Mammary epithelial cell (primary cell): ENCODE measurements at regions of chrX and their contacts with region 1.

Region 1: GRCh38 chrX:113512700-113513395 is 672.2 kb upstream of the AMOT start:
- DNase-seq: peak; percentile 62
- H3K4me3 ChIP-seq: no peak overlapping the region
- H3K27ac ChIP-seq: peak overlapping the region; percentile 4
- H3K4me1 ChIP-seq: no peaks in the 10 kb centered on the region
- H3K27me3 ChIP-seq: peaks cover 3% of the 10 kb centered on the region
- CTCF ChIP-seq: no peak

Region 2: GRCh38 chrX:113580486-113580885 is 67.6 kb after region 1 on chrX:
- CTCF ChIA-PET with region 1: no interaction called
- dilution Hi-C with region 1: no loop called
- in situ Hi-C with region 1: no loop called
- intact Hi-C with region 1: no loop called
- DNase-seq: no peak
- H3K4me3 ChIP-seq: no peak overlapping the region
- H3K27ac ChIP-seq: no peak overlapping the region
- H3K4me1 ChIP-seq: no peaks in the 10 kb centered on the region
- H3K27me3 ChIP-seq: no peaks in the 10 kb centered on the region
- CTCF ChIP-seq: no peak

Region 3: GRCh38 chrX:113644426-113644825 is 131.6 kb after region 1 on chrX:
- CTCF ChIA-PET with region 1: no interaction called
- dilution Hi-C with region 1: no loop called
- in situ Hi-C with region 1: no loop called
- intact Hi-C with region 1: loop called (anchors 5 kb)
- DNase-seq: peak; percentile 52
- H3K4me3 ChIP-seq: no peak overlapping the region
- H3K27ac ChIP-seq: no peak overlapping the region
- H3K4me1 ChIP-seq: no peaks in the 10 kb centered on the region
- H3K27me3 ChIP-seq: no peaks in the 10 kb centered on the region
- CTCF ChIP-seq: no peak